CD4-positive, alpha-beta T cell (primary cell): ENCODE measurements at regions of chr16 and their contacts with region 1.

Region 1: DNA sequence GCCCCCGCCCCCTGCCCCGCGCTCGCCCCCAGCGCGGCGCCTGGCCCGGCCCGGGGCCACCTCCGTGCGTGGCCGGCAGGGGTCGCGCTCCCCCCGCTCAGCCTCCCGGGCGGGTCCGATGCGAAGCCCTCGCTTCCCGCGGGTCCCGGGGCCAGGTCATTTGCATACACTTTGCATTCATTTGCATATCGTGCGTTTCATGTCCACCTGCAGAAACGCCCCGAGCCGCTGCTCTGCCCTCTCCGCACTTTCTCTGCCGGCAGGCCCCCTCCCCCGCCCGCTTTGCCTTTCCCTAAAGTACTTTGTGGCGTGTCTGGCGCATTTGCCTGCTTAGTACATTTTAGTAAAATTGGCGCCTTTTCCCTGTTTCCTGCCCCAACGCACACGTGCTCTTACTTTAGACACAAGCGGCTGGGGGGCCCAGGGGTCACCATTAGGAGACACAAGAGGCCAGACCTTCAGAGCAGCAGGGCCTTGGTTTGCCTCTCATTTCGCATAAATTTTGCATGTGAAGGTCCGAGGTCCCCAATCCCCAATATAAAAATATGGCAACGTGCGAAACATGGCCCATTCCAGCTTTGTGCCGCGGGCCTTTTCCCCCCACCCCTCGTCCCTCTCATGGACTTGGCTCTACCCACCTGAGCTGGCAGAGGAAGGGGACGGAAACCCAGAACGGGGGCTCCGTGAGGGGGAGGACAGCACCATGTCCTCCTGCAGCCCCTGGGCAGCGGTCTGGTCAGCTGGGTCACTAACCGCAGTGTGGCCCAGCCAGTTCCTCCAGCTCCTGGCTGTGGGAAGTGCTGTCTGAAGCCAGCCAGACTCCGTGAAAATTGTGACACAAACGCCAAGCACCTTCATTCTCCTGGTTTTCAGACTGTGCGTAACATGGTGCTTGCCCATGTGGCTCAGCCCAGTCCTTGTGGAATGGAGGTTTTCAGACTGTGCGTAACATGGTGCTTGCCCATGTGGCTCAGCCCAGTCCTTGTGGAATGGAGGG is 34.8 kb downstream of the CBFA2T3 start:
- DNase-seq: peak; percentile 31 to 79 (median 51)
- ATAC-seq: peak; percentile 74
- H3K4me3 ChIP-seq: no peak overlapping the region
- H3K4me3 Mint-ChIP-seq: peak overlapping the region; percentile 56
- H3K27ac ChIP-seq: no peak overlapping the region
- H3K27ac Mint-ChIP-seq: no peak overlapping the region
- H3K4me1 ChIP-seq: peaks cover 40% of the 10 kb centered on the region
- H3K4me1 Mint-ChIP-seq: peaks cover 8% of the 10 kb centered on the region
- H3K27me3 ChIP-seq: peaks cover 45 to 53% of the 10 kb centered on the region in 2 experiments
- H3K27me3 Mint-ChIP-seq: peaks cover 48% of the 10 kb centered on the region
- CTCF ChIP-seq: peak; percentile 58

Region 2: DNA sequence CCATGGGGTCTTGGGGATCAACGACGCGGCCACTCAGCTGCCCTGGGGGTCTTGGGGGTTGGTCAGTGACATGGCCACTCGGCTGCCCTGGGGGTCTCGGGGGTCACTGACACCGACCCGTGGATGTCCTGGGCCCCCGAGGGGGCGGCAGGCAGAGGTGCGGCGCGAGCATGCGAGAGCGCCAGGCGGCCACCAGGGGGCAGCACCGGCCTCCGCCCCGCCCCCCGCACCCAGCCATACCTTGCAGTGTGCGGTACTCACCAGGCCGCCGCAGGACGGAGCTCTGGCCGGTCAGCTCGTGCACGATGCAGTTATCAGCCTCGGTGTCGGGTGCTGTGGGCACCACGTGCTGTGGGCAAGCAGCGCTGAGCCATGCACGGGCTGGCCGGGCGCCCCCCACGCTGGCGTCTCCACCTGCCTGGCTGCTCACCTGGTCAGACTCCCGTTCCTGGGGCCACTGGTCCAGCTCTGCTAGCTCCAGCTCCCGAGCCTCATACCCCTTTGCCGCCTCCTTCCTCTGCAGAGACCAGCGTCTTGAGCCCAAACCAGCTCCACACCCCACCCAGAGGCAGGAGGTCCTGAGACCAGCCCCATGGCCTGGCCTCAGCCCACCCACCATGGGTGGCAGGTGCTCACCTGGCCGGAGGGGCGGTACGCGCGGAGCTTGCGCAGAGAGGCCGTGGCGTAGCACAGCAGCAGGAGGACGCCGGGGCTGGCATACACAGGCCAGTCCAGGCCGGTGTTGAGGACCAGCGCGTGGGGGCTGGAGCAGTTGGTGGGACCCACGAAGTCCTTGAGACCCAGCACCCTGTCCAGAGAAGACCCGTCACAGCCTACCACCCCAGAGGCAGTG is 204.7 kb before region 1 on chr16:
- CTCF ChIA-PET with region 1: no interaction called
- POLR2A ChIA-PET with region 1: no interaction called
- intact Hi-C with region 1: loop called in 1 of 2 experiments (anchors 5 kb)
- DNase-seq: peak; percentile 44 to 89 (median 72)
- ATAC-seq: peak; percentile 98
- H3K4me3 ChIP-seq: no peak overlapping the region
- H3K4me3 Mint-ChIP-seq: no peak overlapping the region
- H3K27ac ChIP-seq: no peak overlapping the region
- H3K27ac Mint-ChIP-seq: no peak overlapping the region
- H3K4me1 ChIP-seq: peaks cover 15% of the 10 kb centered on the region
- H3K4me1 Mint-ChIP-seq: no peaks in the 10 kb centered on the region
- H3K27me3 ChIP-seq: no peaks in the 10 kb centered on the region
- H3K27me3 Mint-ChIP-seq: no peaks in the 10 kb centered on the region
- CTCF ChIP-seq: peak; percentile 98

Region 3: DNA sequence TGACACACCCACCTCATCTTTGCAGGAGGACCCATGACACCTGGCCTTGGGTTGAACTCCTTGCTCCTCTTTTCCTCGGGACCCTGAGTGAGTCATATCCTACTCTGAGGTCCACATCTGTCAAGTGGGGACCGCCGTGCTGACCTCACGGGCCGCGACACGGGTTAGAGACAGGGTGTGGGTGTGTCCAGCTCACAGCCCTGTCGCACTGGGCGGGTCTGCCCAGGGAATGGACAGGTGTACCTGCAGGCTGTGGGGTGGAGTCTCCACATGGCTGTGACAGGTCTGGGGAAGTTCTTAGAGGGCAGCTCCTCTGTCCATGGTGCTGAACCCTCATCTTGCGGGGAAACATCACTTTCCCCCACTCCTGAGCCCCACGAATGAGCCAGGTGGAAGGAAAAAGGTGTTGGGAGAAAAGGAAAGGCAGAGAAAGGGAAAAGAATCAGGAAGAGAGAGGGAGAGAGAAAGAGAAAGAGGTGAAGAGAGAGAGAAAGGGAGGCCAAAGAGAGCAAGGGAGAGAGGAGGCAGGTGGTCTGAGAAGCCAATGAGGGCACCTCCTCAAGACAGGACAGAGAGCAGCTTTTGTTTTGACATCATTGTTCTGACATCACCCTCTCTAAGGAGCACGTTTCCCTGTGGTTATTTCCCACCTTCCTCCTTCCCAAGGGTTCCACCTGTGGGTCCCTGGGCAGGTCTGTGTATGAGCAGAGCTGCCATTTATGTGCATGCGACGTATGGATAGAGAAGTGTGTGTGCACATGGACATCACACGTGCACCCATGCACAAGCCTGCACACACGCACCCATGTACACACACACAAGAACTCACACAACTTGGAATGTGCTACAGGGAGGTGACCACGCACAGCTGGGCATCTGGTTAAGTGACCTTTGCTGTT is 67.3 kb after region 1 on chr16:
- CTCF ChIA-PET with region 1: no interaction called
- POLR2A ChIA-PET with region 1: no interaction called
- intact Hi-C with region 1: no loop called
- DNase-seq: peak in 8 of 14 experiments; percentile 16 to 69 (median 24)
- ATAC-seq: peak; percentile 39
- H3K4me3 ChIP-seq: no peak overlapping the region
- H3K4me3 Mint-ChIP-seq: no peak overlapping the region
- H3K27ac ChIP-seq: no peak overlapping the region
- H3K27ac Mint-ChIP-seq: no peak overlapping the region
- H3K4me1 ChIP-seq: no peaks in the 10 kb centered on the region
- H3K4me1 Mint-ChIP-seq: no peaks in the 10 kb centered on the region
- H3K27me3 ChIP-seq: peaks cover 18 to 26% of the 10 kb centered on the region in 2 experiments
- H3K27me3 Mint-ChIP-seq: peaks cover 32% of the 10 kb centered on the region
- CTCF ChIP-seq: no peak